ENCODE measurements at regions of chr5 and their contacts with region 1.

Region 1: GRCh38 chr5:176415952-176416924 is at the start of gene CLTB:
- DNase-seq: peak; percentile 86
- H3K4me3 Mint-ChIP-seq: peak within 1 kb of the TSS; percentile 77
- H3K27ac Mint-ChIP-seq: peak within 1 kb of the TSS; percentile 84
- H3K4me1 Mint-ChIP-seq: peaks cover 33% of the 10 kb centered on the region
- H3K27me3 Mint-ChIP-seq: peaks cover 9% of the 10 kb centered on the region
- total RNA-seq, gene CLTB: 53.8 to 65.8 TPM

Region 2: GRCh38 chr5:176337913-176338312 is 78.3 kb before region 1 on chr5:
- CTCF ChIA-PET with region 1: no interaction called
- POLR2A ChIA-PET with region 1: no interaction called
- DNase-seq: no peak
- H3K4me3 Mint-ChIP-seq: no peak overlapping the region
- H3K27ac Mint-ChIP-seq: no peak overlapping the region
- H3K4me1 Mint-ChIP-seq: no peaks in the 10 kb centered on the region
- H3K27me3 Mint-ChIP-seq: no peaks in the 10 kb centered on the region

Region 3: DNA sequence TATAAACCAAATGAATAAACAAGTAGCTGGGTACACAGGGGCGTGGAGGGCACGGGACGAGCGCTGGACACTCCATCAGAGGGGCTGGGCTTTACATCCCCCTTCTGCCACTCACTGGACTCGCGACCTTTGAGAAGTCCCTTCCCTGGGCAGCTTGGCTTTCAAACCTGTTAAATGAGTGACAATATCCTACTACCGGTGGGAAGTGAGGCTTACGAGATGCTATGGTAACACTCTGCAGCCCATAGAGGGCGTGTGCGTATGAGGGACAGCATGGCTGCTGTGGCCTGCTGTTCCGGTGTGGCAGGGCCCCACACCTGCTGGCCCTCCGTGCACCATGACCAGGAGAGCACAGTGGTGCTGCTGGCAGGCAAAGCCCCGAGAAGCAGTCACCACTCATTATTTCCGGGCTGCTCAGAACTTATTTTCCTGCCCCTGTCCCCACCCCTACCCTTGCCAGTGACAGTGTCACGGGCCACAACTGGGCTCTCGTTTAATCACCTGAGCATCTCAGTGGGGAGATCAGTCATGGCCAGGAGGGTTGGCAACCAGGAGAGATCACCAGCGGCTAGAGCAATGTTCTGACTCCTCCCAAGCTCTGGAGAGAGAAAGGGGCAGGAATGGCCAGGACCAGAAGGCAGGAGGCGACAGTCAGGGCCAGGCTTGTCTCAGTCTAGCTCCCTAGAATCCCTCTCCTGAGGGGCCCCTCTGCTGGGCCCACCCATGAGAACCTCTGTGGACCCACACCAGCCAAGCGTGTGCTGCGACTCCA is 10.4 kb before region 1 on chr5:
- CTCF ChIA-PET with region 1: interaction called, 26 read pairs
- POLR2A ChIA-PET with region 1: no interaction called
- DNase-seq: no peak
- H3K4me3 Mint-ChIP-seq: no peak overlapping the region
- H3K27ac Mint-ChIP-seq: no peak overlapping the region
- H3K4me1 Mint-ChIP-seq: no peaks in the 10 kb centered on the region
- H3K27me3 Mint-ChIP-seq: no peaks in the 10 kb centered on the region

Region 4: GRCh38 chr5:176543428-176544173 is 127.4 kb after region 1 on chr5:
- CTCF ChIA-PET with region 1: interaction called, 13 read pairs
- POLR2A ChIA-PET with region 1: no interaction called
- DNase-seq: peak; percentile 78
- H3K4me3 Mint-ChIP-seq: peak overlapping the region; percentile 95
- H3K27ac Mint-ChIP-seq: peak overlapping the region; percentile 96
- H3K4me1 Mint-ChIP-seq: peaks cover 62% of the 10 kb centered on the region
- H3K27me3 Mint-ChIP-seq: no peaks in the 10 kb centered on the region

Measured in activated CD4-positive, alpha-beta T cell treated with anti-CD3 and anti-CD28 coated beads, Interleukin-2, amount 10 ng/mL, durations not matched to agents 7 days and 5 days (primary cell).